ENCODE measurements at regions of chr20 and their contacts with region 1.

Region 1: GRCh38 chr20:57654363-57654997 is 34.3 kb upstream of the ZBP1 start:
- DNase-seq: peak; percentile 73
- H3K4me3 Mint-ChIP-seq: no peak overlapping the region
- H3K27ac Mint-ChIP-seq: no peak overlapping the region
- H3K4me1 Mint-ChIP-seq: peaks cover 18% of the 10 kb centered on the region
- H3K27me3 Mint-ChIP-seq: no peaks in the 10 kb centered on the region

Region 2: GRCh38 chr20:57693002-57693640 is 38.6 kb after region 1 on chr20:
- CTCF ChIA-PET with region 1: no interaction called
- intact Hi-C with region 1: no loop called
- DNase-seq: peak; percentile 25
- H3K4me3 Mint-ChIP-seq: no peak overlapping the region
- H3K27ac Mint-ChIP-seq: no peak overlapping the region
- H3K4me1 Mint-ChIP-seq: peaks cover 17% of the 10 kb centered on the region
- H3K27me3 Mint-ChIP-seq: no peaks in the 10 kb centered on the region

Region 3: DNA sequence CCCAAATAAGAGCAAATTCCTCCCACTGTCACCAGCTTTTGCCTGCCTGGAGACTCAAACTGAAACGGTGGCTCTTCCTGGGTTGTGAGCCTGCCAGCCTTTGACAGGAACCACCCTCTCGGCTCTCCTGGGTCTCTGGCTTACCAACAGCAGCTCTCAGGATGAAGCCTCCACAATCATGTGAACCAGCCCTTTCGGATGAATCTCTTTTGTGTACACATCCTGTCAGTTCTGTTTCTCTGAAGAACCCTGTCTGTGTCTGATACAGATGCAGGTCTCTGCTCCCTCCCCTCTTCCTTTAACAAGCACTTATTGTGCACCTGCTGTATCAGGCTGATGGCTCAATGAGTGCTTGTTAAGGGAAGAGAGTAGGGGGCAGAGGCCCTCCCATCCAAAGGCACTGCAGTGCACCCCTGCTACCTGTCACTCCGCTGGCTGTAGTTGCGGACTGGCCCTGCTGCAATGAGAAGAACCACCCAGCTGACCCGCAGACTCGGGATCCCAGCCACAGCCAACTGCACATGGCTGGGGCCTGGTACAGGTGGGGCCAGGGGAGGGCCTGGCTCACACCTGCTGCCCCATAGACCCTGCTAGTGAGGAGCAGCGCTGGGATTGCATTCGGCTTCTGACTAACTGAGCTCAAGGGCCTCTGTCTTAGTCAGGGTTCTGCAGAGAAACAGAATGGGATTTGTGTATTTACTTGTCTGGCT is 175.5 kb after region 1 on chr20:
- CTCF ChIA-PET with region 1: no interaction called
- intact Hi-C with region 1: loop called (anchors 10 kb)
- DNase-seq: no peak
- H3K4me3 Mint-ChIP-seq: no peak overlapping the region
- H3K27ac Mint-ChIP-seq: no peak overlapping the region
- H3K4me1 Mint-ChIP-seq: no peaks in the 10 kb centered on the region
- H3K27me3 Mint-ChIP-seq: no peaks in the 10 kb centered on the region

Region 4: DNA sequence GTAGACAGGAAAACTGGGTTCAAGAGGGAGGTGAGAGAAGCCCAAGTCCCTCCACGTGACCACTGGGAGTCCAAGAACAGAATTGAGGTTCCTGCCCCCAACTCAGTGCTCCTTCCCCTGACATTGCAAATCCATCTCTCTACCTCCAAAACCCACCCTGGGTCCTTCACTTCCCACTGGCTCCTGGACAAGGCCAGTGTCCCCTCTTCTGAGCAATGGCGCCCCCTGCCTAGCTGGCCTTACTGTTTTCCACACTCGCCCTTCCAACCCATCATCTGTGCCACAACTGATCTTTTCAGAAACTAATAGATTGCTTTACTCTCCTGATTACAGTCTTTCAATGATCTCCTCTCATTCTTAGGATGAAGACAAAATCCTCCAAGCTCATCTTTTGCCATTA is 373.6 kb after region 1 on chr20:
- CTCF ChIA-PET with region 1: interaction called, 3 read pairs
- intact Hi-C with region 1: loop called (anchors 1 kb)
- DNase-seq: peak; percentile 43
- H3K4me3 Mint-ChIP-seq: no peak overlapping the region
- H3K27ac Mint-ChIP-seq: no peak overlapping the region
- H3K4me1 Mint-ChIP-seq: peaks cover 2% of the 10 kb centered on the region
- H3K27me3 Mint-ChIP-seq: peaks cover 14% of the 10 kb centered on the region

Region 5: GRCh38 chr20:58087193-58087858 is 432.8 kb after region 1 on chr20:
- CTCF ChIA-PET with region 1: interaction called, 13 read pairs
- intact Hi-C with region 1: loop called (anchors 1 kb)
- DNase-seq: peak; percentile 45
- H3K4me3 Mint-ChIP-seq: no peak overlapping the region
- H3K27ac Mint-ChIP-seq: no peak overlapping the region
- H3K4me1 Mint-ChIP-seq: no peaks in the 10 kb centered on the region
- H3K27me3 Mint-ChIP-seq: no peaks in the 10 kb centered on the region

Region 6: GRCh38 chr20:58179432-58180099 is 525.1 kb after region 1 on chr20:
- CTCF ChIA-PET with region 1: interaction called, 16 read pairs
- intact Hi-C with region 1: loop called (anchors 1 kb)
- DNase-seq: peak; percentile 64
- H3K4me3 Mint-ChIP-seq: peak overlapping the region; percentile 42
- H3K27ac Mint-ChIP-seq: no peak overlapping the region
- H3K4me1 Mint-ChIP-seq: peaks cover 9% of the 10 kb centered on the region
- H3K27me3 Mint-ChIP-seq: peaks cover 12% of the 10 kb centered on the region

Region 7: DNA sequence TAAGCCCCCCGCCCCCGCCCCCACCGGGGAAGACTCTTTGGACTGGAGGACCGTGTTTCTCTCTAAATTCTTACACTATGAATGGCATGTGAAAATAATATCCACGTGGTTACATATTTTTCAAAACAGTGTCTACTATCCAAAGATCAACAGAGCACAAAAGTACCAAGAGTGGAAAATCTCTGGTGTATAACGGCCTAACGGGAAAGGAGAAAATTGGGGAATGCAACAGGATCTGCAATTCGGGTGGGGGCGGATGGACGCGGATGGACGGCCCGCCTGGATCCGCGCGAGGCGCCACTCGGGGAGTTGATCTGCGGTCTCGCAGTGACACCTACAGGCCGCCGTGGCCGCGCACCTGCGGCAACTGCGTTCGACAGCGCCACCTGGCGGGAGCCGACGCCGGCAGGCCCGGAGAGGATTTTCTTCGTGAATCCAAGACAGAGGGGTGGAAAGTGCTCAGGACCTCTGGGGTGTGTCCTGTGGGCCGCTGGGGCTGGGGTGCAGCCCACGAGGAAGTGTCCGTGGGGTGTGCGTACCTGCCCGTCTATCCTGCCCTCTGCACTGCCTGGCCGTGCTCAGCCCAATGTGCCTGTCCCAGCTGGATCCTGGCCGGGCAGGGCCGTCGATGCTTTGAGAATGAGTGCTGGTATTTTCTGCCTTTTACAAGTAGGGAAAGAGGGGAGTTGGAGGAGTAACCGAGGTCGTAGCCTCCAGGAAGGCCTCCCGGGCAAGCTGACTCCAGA is 555.3 kb after region 1 on chr20:
- CTCF ChIA-PET with region 1: no interaction called
- intact Hi-C with region 1: loop called (anchors 1 kb)
- DNase-seq: peak; percentile 89
- H3K4me3 Mint-ChIP-seq: no peak overlapping the region
- H3K27ac Mint-ChIP-seq: no peak overlapping the region
- H3K4me1 Mint-ChIP-seq: peaks cover 2% of the 10 kb centered on the region
- H3K27me3 Mint-ChIP-seq: peaks cover 4% of the 10 kb centered on the region

Measured in activated naive CD4-positive, alpha-beta T cell treated with anti-CD3 and anti-CD28 coated beads for 36 hours (primary cell).